Activated T-helper 2 cell treated with anti-CD3 and anti-CD28 coated beads, Interferon-gamma antibody, Interleukin-2, Interleukin-4, amounts not matched to agents 10 μg/mL and 5 μg/mL and 100 μg/mL, durations not matched to agents 14 hours and 24 hours and 36 hours (primary cell): ENCODE measurements at regions of chr13 and their contacts with region 1.

Region 1: GRCh38 chr13:77480066-77480465 is 55.4 kb upstream of the SCEL start:
- DNase-seq: no peak
- H3K4me3 Mint-ChIP-seq: no peak overlapping the region
- H3K27ac Mint-ChIP-seq: no peak overlapping the region
- H3K4me1 Mint-ChIP-seq: peaks cover 11% of the 10 kb centered on the region
- H3K27me3 Mint-ChIP-seq: peaks cover 15% of the 10 kb centered on the region

Region 2: DNA sequence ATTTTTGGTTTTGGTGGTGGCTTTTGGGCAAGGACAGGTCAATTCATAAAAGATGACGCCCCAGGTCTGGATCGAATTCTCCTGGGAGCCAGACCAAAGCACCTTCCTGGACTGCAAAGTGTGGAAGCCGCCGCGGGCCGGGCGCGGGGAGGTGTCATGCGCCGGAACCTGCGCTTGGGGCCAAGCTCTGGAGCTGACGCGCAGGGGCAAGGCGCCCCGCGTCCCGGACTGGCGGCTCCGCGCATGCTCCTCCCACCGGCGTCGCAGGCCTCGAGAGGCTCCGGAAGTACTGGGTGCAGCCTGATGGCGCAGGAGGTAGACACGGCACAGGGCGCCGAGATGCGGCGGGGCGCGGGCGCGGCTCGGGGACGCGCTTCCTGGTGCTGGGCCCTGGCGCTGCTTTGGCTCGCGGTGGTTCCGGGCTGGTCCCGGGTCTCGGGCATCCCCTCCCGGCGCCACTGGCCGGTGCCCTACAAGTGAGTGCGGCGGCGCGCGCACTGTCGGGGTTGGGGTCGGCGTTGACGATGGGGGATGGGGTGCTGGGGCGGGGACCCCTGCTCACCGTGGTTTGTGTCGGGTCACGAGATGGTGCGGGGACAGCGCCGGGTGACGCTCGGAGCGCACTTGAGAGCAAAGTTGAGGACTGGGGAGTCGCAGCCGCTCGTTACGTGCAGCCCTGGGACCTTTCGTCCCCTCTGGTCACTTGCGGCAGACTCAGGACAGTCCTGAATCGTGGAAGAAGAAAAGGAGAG is 488.1 kb before region 1 on chr13 and contains the start of gene CLN5:
- intact Hi-C with region 1: loop called (anchors 10 kb)
- DNase-seq: peak; percentile 95
- H3K4me3 Mint-ChIP-seq: peak within 1 kb of the TSS; percentile 89
- H3K27ac Mint-ChIP-seq: peak within 1 kb of the TSS; percentile 90
- H3K4me1 Mint-ChIP-seq: peaks cover 34% of the 10 kb centered on the region
- H3K27me3 Mint-ChIP-seq: peaks cover 1% of the 10 kb centered on the region
- total RNA-seq, gene CLN5: 13.5 and 15.8 TPM in 2 replicates

Region 3: GRCh38 chr13:77184455-77184854 is 295.6 kb before region 1 on chr13:
- intact Hi-C with region 1: loop called (anchors 5 kb)
- DNase-seq: no peak
- H3K4me3 Mint-ChIP-seq: no peak overlapping the region
- H3K27ac Mint-ChIP-seq: peak overlapping the region; percentile 43
- H3K4me1 Mint-ChIP-seq: peaks cover 17% of the 10 kb centered on the region
- H3K27me3 Mint-ChIP-seq: no peaks in the 10 kb centered on the region

Region 4: GRCh38 chr13:77345150-77345780 is 134.8 kb before region 1 on chr13:
- intact Hi-C with region 1: loop called (anchors 1 kb)
- DNase-seq: no peak
- H3K4me3 Mint-ChIP-seq: no peak overlapping the region
- H3K27ac Mint-ChIP-seq: peak overlapping the region; percentile 80
- H3K4me1 Mint-ChIP-seq: peaks cover 14% of the 10 kb centered on the region
- H3K27me3 Mint-ChIP-seq: no peaks in the 10 kb centered on the region

Region 5: GRCh38 chr13:77389625-77390000 is 90.5 kb before region 1 on chr13:
- intact Hi-C with region 1: loop called (anchors 1 kb)
- DNase-seq: no peak
- H3K4me3 Mint-ChIP-seq: no peak overlapping the region
- H3K27ac Mint-ChIP-seq: peak overlapping the region; percentile 34
- H3K4me1 Mint-ChIP-seq: peaks cover 41% of the 10 kb centered on the region
- H3K27me3 Mint-ChIP-seq: peaks cover 29% of the 10 kb centered on the region

Region 6: GRCh38 chr13:77502104-77502720 is 22.1 kb after region 1 on chr13:
- intact Hi-C with region 1: no loop called
- DNase-seq: no peak
- H3K4me3 Mint-ChIP-seq: no peak overlapping the region
- H3K27ac Mint-ChIP-seq: no peak overlapping the region
- H3K4me1 Mint-ChIP-seq: no peaks in the 10 kb centered on the region
- H3K27me3 Mint-ChIP-seq: peaks cover 17% of the 10 kb centered on the region

Region 7: GRCh38 chr13:77751513-77752456 is 271.7 kb after region 1 on chr13:
- intact Hi-C with region 1: loop called (anchors 5 kb)
- DNase-seq: peak; percentile 23
- H3K4me3 Mint-ChIP-seq: no peak overlapping the region
- H3K27ac Mint-ChIP-seq: no peak overlapping the region
- H3K4me1 Mint-ChIP-seq: peaks cover 18% of the 10 kb centered on the region
- H3K27me3 Mint-ChIP-seq: no peaks in the 10 kb centered on the region